Ovary (tissue), 10 donors: ENCODE measurements at regions of chr6 and their contacts with region 1.

Region 1: DNA sequence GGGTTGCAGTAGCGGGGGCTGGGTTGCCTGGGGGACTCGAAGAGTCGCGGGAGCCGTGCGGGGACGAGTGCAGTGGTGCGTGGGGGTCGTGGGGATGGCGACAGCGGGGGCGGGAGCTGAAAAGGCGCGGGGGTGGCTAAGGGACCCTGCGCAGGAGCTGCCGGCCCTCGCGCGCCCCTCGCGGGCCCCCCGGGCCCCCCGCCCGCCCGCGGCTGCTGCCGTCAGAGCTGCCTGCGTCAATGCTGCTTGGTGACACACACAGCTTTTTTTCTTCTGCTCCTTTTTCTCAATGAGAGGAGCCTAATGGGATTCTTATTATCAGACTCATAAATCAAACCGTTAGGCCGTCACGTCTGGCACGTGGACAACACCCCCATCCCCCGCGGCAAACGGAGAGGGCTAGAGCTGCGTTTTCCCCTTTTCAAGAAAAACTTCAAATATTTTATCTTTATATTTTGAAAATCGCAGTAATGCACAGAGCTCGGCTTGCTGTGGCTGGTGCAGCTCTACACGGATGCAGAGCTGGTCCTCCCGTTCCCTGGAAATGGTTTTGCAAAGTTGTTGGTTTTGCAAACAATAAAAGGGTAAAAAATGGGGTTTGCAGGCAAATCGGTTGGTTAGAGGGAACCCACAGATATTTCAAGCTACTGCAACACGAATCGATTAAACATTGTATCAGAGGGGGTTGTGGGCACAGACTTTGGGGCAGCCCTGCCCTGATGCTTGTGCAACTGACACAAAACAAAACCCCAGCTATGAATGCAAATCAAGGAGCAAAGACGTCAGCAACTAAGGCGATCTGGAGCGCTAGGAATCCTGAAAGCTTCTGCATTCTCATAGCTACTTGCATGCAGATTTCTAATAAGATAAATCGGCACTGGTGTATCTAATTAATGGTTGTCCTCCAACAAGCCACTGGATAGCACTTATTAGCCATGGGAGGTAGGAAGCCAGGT is 161.4 kb downstream of the TBXT start:
- DNase-seq: peak; percentile 85 to 93 (median 93)
- H3K4me3 ChIP-seq: peak overlapping the region; percentile 39
- H3K27ac ChIP-seq: peak overlapping the region; percentile 72 to 94
- H3K4me1 ChIP-seq: peaks cover 5% of the 10 kb centered on the region
- H3K27me3 ChIP-seq: no peaks in the 10 kb centered on the region
- CTCF ChIP-seq: no peak
- EP300 ChIP-seq: peak; percentile 60
- POLR2A ChIP-seq: no peak

Region 2: DNA sequence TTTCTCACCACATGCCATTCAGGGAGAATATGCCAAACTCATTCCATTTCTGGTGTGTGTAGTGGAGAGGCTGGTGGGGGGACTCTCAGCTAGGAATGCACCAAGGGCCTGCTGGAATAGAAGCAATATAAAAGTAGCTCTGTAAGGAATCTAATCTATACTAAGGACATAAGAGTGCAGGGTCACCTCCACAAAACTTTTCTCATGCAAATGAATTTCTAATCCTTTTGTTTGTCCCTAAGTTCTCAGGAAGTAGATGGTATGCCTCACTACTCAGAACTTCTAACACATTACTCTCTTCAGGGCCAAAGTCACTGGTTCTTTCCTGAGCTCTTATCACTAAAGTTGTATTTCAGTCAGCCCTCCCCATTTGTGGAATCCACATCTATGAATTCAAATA is 1124.0 kb before region 1 on chr6:
- intact Hi-C with region 1: no loop called
- DNase-seq: no peak
- H3K4me3 ChIP-seq: no peak overlapping the region
- H3K27ac ChIP-seq: no peak overlapping the region
- H3K4me1 ChIP-seq: no peaks in the 10 kb centered on the region
- H3K27me3 ChIP-seq: no peaks in the 10 kb centered on the region
- CTCF ChIP-seq: no peak
- EP300 ChIP-seq: no peak
- POLR2A ChIP-seq: no peak

Region 3: DNA sequence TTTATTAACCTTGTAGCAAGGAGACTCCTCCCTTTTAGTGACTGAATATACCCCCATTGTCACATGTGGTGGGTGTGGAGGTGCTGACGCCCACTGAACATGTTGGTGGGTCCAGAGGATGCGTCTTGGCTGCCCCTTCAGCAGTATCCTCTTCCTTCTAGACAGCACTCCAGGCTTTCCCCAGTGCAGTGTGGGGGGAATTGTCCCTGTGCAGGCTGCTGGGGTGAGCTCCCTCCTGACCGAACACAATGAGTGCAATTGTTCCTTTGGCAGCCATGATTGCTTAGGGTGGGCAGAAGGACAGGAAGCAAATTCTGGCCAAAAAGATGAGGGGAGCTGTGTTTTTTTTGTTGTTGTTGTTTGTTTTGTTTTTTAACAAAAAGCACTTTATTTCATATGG is 133.9 kb before region 1 on chr6:
- intact Hi-C with region 1: no loop called
- DNase-seq: no peak
- H3K4me3 ChIP-seq: no peak overlapping the region
- H3K27ac ChIP-seq: no peak overlapping the region
- H3K4me1 ChIP-seq: peaks cover 5% of the 10 kb centered on the region
- H3K27me3 ChIP-seq: no peaks in the 10 kb centered on the region
- CTCF ChIP-seq: no peak
- EP300 ChIP-seq: no peak
- POLR2A ChIP-seq: no peak

Region 4: DNA sequence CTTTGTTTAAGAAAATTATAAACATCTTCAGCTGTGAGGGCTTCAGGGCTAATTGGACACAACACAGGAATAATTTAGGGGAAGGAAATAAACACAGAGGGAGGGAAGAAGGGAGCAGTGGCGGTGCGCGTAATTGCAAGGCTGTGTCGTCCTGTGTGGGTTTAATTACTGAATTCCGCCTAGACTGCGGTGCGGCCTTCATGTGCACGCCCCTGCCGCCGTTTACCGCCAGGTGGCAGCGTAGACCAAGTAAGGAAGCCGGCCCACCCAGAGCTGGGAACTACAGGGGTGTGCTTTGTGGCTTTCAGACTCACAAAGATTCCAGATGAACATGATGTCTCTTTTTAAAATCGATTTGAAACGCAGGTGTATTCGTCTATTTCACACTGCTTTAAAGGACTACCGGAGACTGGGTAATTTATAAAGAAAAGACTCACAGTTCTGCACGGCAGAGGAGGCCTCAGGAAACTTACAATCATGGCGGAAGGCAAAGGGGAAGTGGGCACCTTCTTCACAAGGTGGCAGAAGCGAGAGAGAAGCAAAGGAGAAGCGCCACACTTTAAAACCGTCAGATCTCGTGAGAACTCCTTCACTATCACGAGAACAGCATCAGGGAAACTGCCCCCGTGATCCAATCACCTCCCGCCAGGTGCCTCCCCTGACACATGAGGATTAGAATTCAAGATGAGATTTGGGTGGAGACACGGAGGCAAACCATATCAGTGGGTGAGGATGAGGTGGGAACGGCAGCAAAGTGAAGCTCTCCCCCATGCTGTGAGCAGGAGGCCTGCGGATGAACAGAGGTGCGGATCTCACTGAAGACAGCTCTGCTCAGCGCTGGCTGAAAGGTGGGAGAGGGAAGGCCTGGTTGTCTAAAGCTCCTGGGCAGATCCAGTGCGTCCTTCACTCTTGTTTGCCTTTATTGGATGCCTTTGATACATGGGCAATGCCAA is 121.1 kb before region 1 on chr6:
- intact Hi-C with region 1: loop called in 1 of 4 experiments (anchors 10 kb)
- DNase-seq: peak; percentile 76 to 93 (median 90)
- H3K4me3 ChIP-seq: no peak overlapping the region
- H3K27ac ChIP-seq: no peak overlapping the region
- H3K4me1 ChIP-seq: no peaks in the 10 kb centered on the region
- H3K27me3 ChIP-seq: no peaks in the 10 kb centered on the region
- CTCF ChIP-seq: peak; percentile 55 to 93 (median 92)
- EP300 ChIP-seq: no peak
- POLR2A ChIP-seq: peak; percentile 11

Region 5: DNA sequence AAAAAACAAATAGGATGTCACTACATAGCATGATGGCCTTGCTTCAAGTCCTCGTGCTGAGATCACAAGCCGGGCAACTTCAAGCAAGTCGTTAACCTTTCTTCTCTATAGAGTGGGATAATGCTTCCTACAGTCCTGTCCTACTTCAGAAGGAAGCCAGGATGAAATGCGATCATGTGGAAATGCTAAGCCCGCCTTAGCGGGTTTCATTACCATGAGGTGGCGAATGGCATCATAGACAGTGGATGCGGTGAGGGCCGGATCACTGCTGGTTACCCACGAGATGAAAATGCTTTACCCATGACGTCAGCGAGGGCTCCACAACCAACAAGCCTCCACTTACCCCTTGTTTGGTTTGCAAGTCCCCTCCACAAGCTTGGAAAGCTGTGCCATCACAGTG is 45.0 kb before region 1 on chr6:
- intact Hi-C with region 1: no loop called
- DNase-seq: no peak
- H3K4me3 ChIP-seq: no peak overlapping the region
- H3K27ac ChIP-seq: no peak overlapping the region
- H3K4me1 ChIP-seq: no peaks in the 10 kb centered on the region
- H3K27me3 ChIP-seq: no peaks in the 10 kb centered on the region
- CTCF ChIP-seq: no peak
- EP300 ChIP-seq: no peak
- POLR2A ChIP-seq: no peak

Region 6: GRCh38 chr6:165987483-165988301 is 18.5 kb before region 1 on chr6:
- intact Hi-C with region 1: loop called in 1 of 4 experiments (anchors 2 kb)
- DNase-seq: peak; percentile 94 to 98 (median 97)
- H3K4me3 ChIP-seq: peak overlapping the region; percentile 67
- H3K27ac ChIP-seq: peak overlapping the region; percentile 68 to 83
- H3K4me1 ChIP-seq: peaks cover 7% of the 10 kb centered on the region
- H3K27me3 ChIP-seq: no peaks in the 10 kb centered on the region
- CTCF ChIP-seq: no peak
- EP300 ChIP-seq: peak; percentile 71
- POLR2A ChIP-seq: peak; percentile 67

Region 7: GRCh38 chr6:166025149-166025898 is 19.1 kb after region 1 on chr6:
- intact Hi-C with region 1: no loop called
- DNase-seq: no peak
- H3K4me3 ChIP-seq: no peak overlapping the region
- H3K27ac ChIP-seq: no peak overlapping the region
- H3K4me1 ChIP-seq: no peaks in the 10 kb centered on the region
- H3K27me3 ChIP-seq: no peaks in the 10 kb centered on the region
- CTCF ChIP-seq: no peak
- EP300 ChIP-seq: no peak
- POLR2A ChIP-seq: no peak

Region 8: DNA sequence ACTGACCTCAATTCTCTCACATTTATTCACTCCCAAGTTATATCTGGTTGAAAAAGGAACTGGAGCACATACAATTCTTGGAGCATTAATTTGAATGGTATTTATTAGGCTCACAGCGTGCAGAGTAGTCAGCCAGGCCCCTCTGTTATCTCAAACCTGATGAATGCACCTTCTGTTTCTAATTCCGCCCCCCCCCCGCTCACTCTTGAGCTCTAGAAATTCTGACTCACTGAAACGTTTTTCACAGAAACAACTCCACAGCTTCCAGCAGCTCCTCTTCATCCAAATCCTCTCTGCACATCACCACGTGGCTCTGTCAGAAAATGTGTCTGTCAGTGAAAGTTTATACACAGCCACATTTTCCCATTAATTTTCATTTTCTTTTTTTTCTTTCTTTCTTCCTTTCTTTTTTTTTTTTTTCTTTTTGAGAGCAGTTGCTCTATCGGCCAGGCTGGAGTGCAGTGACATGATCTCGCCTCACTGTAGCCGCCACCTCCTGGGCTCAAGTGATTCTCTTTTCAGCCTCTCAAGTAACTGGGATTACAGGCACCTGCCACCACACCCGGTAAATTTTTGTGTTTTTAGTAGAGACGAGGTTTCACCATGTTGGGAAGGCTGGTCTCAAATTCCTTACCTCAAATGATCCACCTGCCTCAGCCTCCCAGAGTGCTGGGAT is 52.0 kb after region 1 on chr6:
- intact Hi-C with region 1: loop called in 1 of 4 experiments (anchors 5 kb)
- DNase-seq: peak; percentile 66 to 84 (median 77)
- H3K4me3 ChIP-seq: no peak overlapping the region
- H3K27ac ChIP-seq: peak overlapping the region in 1 of 2 donors; percentile 72
- H3K4me1 ChIP-seq: peaks cover 2% of the 10 kb centered on the region
- H3K27me3 ChIP-seq: no peaks in the 10 kb centered on the region
- CTCF ChIP-seq: no peak
- EP300 ChIP-seq: no peak
- POLR2A ChIP-seq: no peak

Region 9: DNA sequence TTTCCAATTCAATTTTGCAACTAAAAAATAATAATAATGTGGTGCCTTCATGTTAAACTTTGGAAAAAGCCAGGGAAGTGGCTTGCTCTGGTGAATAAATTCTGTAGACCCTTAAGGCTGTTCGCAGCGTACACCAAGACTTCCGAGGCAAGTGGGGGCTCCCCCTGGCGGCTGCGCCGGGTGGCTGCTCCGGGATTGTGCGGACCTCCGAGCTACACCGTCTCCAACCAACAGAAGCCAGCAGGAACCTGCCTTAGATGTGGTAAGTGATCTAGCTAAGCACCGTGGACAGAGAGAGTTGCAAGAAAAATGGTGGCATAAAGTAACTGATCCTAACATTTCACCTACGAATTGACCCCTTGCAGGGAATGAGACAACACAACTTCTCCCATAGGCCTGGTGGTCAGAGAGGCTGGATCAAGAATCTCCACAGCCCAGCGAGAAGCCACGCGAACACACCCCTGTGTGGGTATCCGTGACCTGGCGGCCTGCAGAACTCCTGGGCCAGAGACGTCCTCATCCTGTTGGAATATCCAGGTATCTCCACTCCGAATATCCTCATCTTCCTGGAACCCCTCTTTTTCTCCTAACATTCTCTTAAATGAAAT is 91.8 kb after region 1 on chr6:
- intact Hi-C with region 1: loop called in 1 of 4 experiments (anchors 5 kb)
- DNase-seq: peak; percentile 70 to 91 (median 84)
- H3K4me3 ChIP-seq: peak overlapping the region; percentile 25
- H3K27ac ChIP-seq: no peak overlapping the region
- H3K4me1 ChIP-seq: no peaks in the 10 kb centered on the region
- H3K27me3 ChIP-seq: no peaks in the 10 kb centered on the region
- CTCF ChIP-seq: peak; percentile 78 to 87 (median 81)
- EP300 ChIP-seq: no peak
- POLR2A ChIP-seq: no peak